MCF 10A (cell line): ENCODE measurements at regions of chr15 and their contacts with region 1.

Region 1: GRCh38 chr15:80776420-80777045 is 2.6 kb upstream of the CEMIP start:
- DNase-seq: peak; percentile 65
- H3K4me3 Mint-ChIP-seq: no peak overlapping the region
- H3K27ac Mint-ChIP-seq: peak overlapping the region; percentile 31
- H3K4me1 Mint-ChIP-seq: peaks cover 20% of the 10 kb centered on the region
- H3K27me3 Mint-ChIP-seq: no peaks in the 10 kb centered on the region
- CTCF ChIP-seq: peak; percentile 54

Region 2: DNA sequence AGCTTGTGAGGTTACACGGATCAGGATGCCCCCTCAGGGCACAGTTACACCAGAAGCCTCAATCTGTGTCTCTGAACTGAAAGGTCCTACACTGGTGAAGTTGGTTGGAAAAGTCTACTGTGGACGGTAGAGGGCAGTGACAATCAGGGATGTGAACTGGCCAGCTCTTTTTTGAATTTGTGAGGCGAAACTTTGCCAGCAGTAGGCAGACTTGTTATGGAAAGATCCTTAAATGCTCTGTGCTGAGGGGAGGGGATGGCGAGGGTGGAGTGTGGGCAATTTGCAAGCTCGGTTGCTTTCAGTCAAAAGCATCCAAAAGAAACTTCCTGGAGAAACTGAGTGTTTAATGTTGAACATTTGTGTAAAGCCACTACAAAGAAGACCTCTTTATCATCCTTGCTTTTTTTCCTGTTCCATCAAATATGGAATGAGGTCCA is 208.8 kb before region 1 on chr15:
- CTCF ChIA-PET with region 1: interaction called, 260 read pairs
- POLR2A ChIA-PET with region 1: interaction called, 28 read pairs
- intact Hi-C with region 1: loop called (anchors 1 kb)
- DNase-seq: peak; percentile 85
- H3K4me3 Mint-ChIP-seq: no peak overlapping the region
- H3K27ac Mint-ChIP-seq: no peak overlapping the region
- H3K4me1 Mint-ChIP-seq: peaks cover 28% of the 10 kb centered on the region
- H3K27me3 Mint-ChIP-seq: no peaks in the 10 kb centered on the region
- CTCF ChIP-seq: peak; percentile 74

Region 3: GRCh38 chr15:80619680-80620079 is 156.9 kb before region 1 on chr15:
- CTCF ChIA-PET with region 1: interaction called, 51 read pairs
- POLR2A ChIA-PET with region 1: interaction called, 3 read pairs
- intact Hi-C with region 1: no loop called
- DNase-seq: no peak
- H3K4me3 Mint-ChIP-seq: no peak overlapping the region
- H3K27ac Mint-ChIP-seq: no peak overlapping the region
- H3K4me1 Mint-ChIP-seq: peaks cover 24% of the 10 kb centered on the region
- H3K27me3 Mint-ChIP-seq: no peaks in the 10 kb centered on the region
- CTCF ChIP-seq: no peak

Region 4: DNA sequence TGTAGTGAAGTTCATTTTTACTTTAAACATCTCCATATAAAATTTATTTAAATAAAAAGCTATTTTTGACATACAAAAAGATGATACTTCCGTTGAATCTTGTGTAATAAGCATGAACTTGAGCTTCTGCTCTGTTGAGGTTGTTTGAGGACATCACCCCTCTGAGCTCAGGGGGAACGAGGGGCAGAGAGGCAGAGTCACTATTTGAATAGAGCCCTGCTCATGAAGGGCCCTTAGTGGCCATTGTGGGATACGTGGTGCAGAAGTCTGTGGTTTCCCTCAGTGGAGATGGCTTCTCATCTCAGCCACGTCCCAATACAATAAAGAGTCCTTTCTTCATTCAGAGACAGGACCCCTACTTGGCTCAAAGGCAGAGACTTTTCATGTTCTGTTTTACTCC is 13.3 kb after region 1 on chr15:
- CTCF ChIA-PET with region 1: interaction called, 28 read pairs
- POLR2A ChIA-PET with region 1: interaction called, 4 read pairs
- intact Hi-C with region 1: no loop called
- DNase-seq: no peak
- H3K4me3 Mint-ChIP-seq: no peak overlapping the region
- H3K27ac Mint-ChIP-seq: no peak overlapping the region
- H3K4me1 Mint-ChIP-seq: peaks cover 6% of the 10 kb centered on the region
- H3K27me3 Mint-ChIP-seq: no peaks in the 10 kb centered on the region
- CTCF ChIP-seq: no peak

Region 5: GRCh38 chr15:80970018-80970658 is 193.6 kb after region 1 on chr15:
- CTCF ChIA-PET with region 1: interaction called, 133 read pairs
- POLR2A ChIA-PET with region 1: interaction called, 15 read pairs
- intact Hi-C with region 1: loop called (anchors 1 kb)
- DNase-seq: peak; percentile 71
- H3K4me3 Mint-ChIP-seq: no peak overlapping the region
- H3K27ac Mint-ChIP-seq: no peak overlapping the region
- H3K4me1 Mint-ChIP-seq: no peaks in the 10 kb centered on the region
- H3K27me3 Mint-ChIP-seq: no peaks in the 10 kb centered on the region
- CTCF ChIP-seq: peak; percentile 79